ENCODE measurements at regions of chr10 and their contacts with region 1.

Region 1: GRCh38 chr10:13659897-13660550 is 73.3 kb downstream of the PRPF18 start:
- DNase-seq: peak; percentile 63
- ATAC-seq: peak; percentile 75
- H3K4me3 Mint-ChIP-seq: no peak overlapping the region
- H3K27ac Mint-ChIP-seq: no peak overlapping the region
- H3K4me1 Mint-ChIP-seq: peaks cover 11% of the 10 kb centered on the region
- H3K27me3 Mint-ChIP-seq: no peaks in the 10 kb centered on the region
- CTCF ChIP-seq: peak; percentile 83

Region 2: GRCh38 chr10:13712837-13713581 is 53.0 kb after region 1 on chr10:
- CTCF ChIA-PET with region 1: no interaction called
- POLR2A ChIA-PET with region 1: no interaction called
- intact Hi-C with region 1: loop called (anchors 2 kb)
- DNase-seq: peak; percentile 47
- ATAC-seq: peak; percentile 90
- H3K4me3 Mint-ChIP-seq: peak overlapping the region; percentile 72
- H3K27ac Mint-ChIP-seq: peak overlapping the region; percentile 97
- H3K4me1 Mint-ChIP-seq: peaks cover 28% of the 10 kb centered on the region
- H3K27me3 Mint-ChIP-seq: no peaks in the 10 kb centered on the region
- CTCF ChIP-seq: no peak

Region 3: GRCh38 chr10:13993169-13993568 is 333.1 kb after region 1 on chr10:
- CTCF ChIA-PET with region 1: no interaction called
- POLR2A ChIA-PET with region 1: no interaction called
- intact Hi-C with region 1: loop called (anchors 5 kb)
- DNase-seq: no peak
- ATAC-seq: peak; percentile 13
- H3K4me3 Mint-ChIP-seq: peak overlapping the region; percentile 16
- H3K27ac Mint-ChIP-seq: peak overlapping the region; percentile 42
- H3K4me1 Mint-ChIP-seq: peaks cover 47% of the 10 kb centered on the region
- H3K27me3 Mint-ChIP-seq: no peaks in the 10 kb centered on the region
- CTCF ChIP-seq: no peak